Endothelial cell of umbilical vein (primary cell): ENCODE measurements at regions of chr7 and their contacts with region 1.

Region 1: GRCh38 chr7:20598459-20599309 is 16.8 kb upstream of the ABCB5 start:
- DNase-seq: peak; percentile 95
- H3K4me3 ChIP-seq: peak overlapping the region in 2 of 3 experiments; percentile 2 to 14
- H3K27ac ChIP-seq: peak overlapping the region; percentile 44
- H3K4me1 ChIP-seq: peaks cover 47% of the 10 kb centered on the region
- H3K27me3 ChIP-seq: no peaks in the 10 kb centered on the region
- CTCF ChIP-seq: peak; percentile 53 to 63
- POLR2A ChIP-seq: no peak

Region 2: GRCh38 chr7:19572566-19572965 is 1026.1 kb before region 1 on chr7:
- CTCF ChIA-PET with region 1: no interaction called
- POLR2A ChIA-PET with region 1: no interaction called
- dilution Hi-C with region 1: no loop called
- intact Hi-C with region 1: no loop called
- DNase-seq: no peak
- H3K4me3 ChIP-seq: no peak overlapping the region
- H3K27ac ChIP-seq: no peak overlapping the region
- H3K4me1 ChIP-seq: no peaks in the 10 kb centered on the region
- H3K27me3 ChIP-seq: no peaks in the 10 kb centered on the region
- CTCF ChIP-seq: no peak
- POLR2A ChIP-seq: no peak

Region 3: GRCh38 chr7:19713676-19714075 is 885.0 kb before region 1 on chr7:
- CTCF ChIA-PET with region 1: interaction called, 354 read pairs
- POLR2A ChIA-PET with region 1: no interaction called
- dilution Hi-C with region 1: no loop called
- intact Hi-C with region 1: loop called (anchors 1 kb)
- DNase-seq: peak; percentile 62
- H3K4me3 ChIP-seq: no peak overlapping the region
- H3K27ac ChIP-seq: no peak overlapping the region
- H3K4me1 ChIP-seq: no peaks in the 10 kb centered on the region
- H3K27me3 ChIP-seq: peaks cover 10 to 29% of the 10 kb centered on the region in 2 experiments
- CTCF ChIP-seq: peak; percentile 20 to 39
- POLR2A ChIP-seq: no peak

Region 4: GRCh38 chr7:19982841-19983835 is 615.5 kb before region 1 on chr7:
- CTCF ChIA-PET with region 1: interaction called, 55 read pairs
- POLR2A ChIA-PET with region 1: interaction called, 3 read pairs
- dilution Hi-C with region 1: no loop called
- intact Hi-C with region 1: loop called (anchors 1 kb)
- DNase-seq: peak; percentile 58
- H3K4me3 ChIP-seq: no peak overlapping the region
- H3K27ac ChIP-seq: no peak overlapping the region
- H3K4me1 ChIP-seq: no peaks in the 10 kb centered on the region
- H3K27me3 ChIP-seq: no peaks in the 10 kb centered on the region
- CTCF ChIP-seq: peak in 1 of 2 donors; percentile 31
- POLR2A ChIP-seq: no peak

Region 5: DNA sequence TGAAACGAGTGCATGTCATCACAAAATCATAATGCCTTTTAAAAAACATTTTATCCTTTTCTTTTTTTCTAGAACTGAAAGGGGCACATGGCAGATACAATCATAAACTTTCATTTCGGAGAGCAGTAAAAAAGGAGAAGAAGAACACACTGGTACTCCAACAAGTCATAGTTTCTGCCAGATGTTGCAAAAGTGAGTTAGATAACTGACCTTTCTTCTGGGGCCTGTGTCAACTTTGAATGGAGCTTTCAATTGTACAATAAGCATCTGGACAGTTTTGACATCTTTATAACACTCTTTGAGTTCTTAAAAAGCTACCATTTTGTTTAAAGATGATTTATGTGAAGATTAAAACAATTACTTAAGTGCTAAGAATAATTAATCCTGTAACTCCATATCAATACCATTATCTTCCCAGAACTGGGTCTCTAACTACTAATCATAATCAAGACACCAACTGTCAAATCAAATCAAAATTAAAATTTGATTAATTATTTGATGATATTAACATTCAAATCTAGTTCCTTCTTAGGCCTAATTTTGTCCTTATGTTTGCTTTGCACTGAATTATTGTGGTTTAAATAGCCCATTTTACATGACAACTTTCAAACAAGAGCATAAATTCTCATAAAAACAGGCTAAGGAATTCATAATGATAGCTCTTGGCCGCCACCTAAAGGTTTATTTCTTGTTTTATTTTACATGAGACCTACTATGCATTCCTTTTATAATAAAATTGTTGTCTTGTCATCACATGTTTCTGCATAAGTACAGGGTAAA is 287.5 kb before region 1 on chr7:
- CTCF ChIA-PET with region 1: interaction called, 58 read pairs
- POLR2A ChIA-PET with region 1: no interaction called
- dilution Hi-C with region 1: no loop called
- intact Hi-C with region 1: loop called (anchors 1 kb)
- DNase-seq: peak; percentile 76
- H3K4me3 ChIP-seq: no peak overlapping the region
- H3K27ac ChIP-seq: no peak overlapping the region
- H3K4me1 ChIP-seq: peaks cover 19% of the 10 kb centered on the region
- H3K27me3 ChIP-seq: no peaks in the 10 kb centered on the region
- CTCF ChIP-seq: peak; percentile 19 to 26
- POLR2A ChIP-seq: no peak

Region 6: GRCh38 chr7:20407585-20408461 is 190.9 kb before region 1 on chr7:
- CTCF ChIA-PET with region 1: interaction called, 24 read pairs
- POLR2A ChIA-PET with region 1: interaction called, 3 read pairs
- dilution Hi-C with region 1: no loop called
- intact Hi-C with region 1: loop called (anchors 2 kb)
- DNase-seq: peak; percentile 93
- H3K4me3 ChIP-seq: no peak overlapping the region
- H3K27ac ChIP-seq: peak overlapping the region; percentile 37
- H3K4me1 ChIP-seq: peaks cover 21% of the 10 kb centered on the region
- H3K27me3 ChIP-seq: no peaks in the 10 kb centered on the region
- CTCF ChIP-seq: no peak
- POLR2A ChIP-seq: no peak

Region 7: DNA sequence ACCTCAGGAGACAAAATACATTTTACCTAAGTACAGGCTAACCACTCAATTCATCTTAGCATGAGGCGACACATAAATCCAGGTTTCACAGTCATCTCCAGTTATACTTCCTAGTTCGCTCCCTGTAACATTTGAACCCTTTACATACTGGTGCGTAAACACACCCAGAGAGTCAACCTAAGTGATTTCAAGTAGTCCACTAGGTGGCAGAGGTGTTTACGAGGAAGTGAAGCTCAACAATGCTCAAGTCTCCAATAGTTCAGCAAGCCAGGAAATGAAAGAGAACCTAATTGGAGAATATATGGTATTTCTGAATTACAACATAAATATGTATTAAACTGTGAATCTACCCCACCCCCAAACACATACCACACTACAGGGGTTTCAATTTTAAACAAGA is 59.5 kb before region 1 on chr7:
- CTCF ChIA-PET with region 1: interaction called, 10 read pairs
- POLR2A ChIA-PET with region 1: no interaction called
- dilution Hi-C with region 1: no loop called
- intact Hi-C with region 1: loop called (anchors 2 kb)
- DNase-seq: no peak
- H3K4me3 ChIP-seq: no peak overlapping the region
- H3K27ac ChIP-seq: no peak overlapping the region
- H3K4me1 ChIP-seq: peaks cover 5% of the 10 kb centered on the region
- H3K27me3 ChIP-seq: no peaks in the 10 kb centered on the region
- CTCF ChIP-seq: no peak
- POLR2A ChIP-seq: no peak

Region 8: DNA sequence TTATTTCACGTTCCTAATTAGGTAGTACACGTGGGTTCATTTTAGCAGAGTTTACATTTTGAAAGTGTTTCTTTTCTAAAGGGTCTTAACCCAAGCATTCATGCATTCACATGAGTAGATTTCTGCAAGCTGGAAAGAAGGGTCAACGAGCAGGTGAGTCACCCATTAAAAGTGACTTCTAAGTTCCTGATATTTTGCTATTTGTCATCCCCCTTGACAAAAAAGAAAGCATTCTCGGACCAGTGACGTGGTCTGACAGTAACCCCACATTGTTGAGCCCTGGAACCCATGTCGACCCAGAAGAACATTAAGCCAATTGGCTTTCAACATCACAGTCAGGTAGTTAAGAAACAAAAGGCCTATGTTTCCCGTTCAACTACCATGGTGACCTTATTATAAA is 66.4 kb after region 1 on chr7:
- CTCF ChIA-PET with region 1: no interaction called
- POLR2A ChIA-PET with region 1: no interaction called
- dilution Hi-C with region 1: no loop called
- intact Hi-C with region 1: no loop called
- DNase-seq: no peak
- H3K4me3 ChIP-seq: no peak overlapping the region
- H3K27ac ChIP-seq: no peak overlapping the region
- H3K4me1 ChIP-seq: no peaks in the 10 kb centered on the region
- H3K27me3 ChIP-seq: no peaks in the 10 kb centered on the region
- CTCF ChIP-seq: no peak
- POLR2A ChIP-seq: no peak